Mammary epithelial cell (primary cell): ENCODE measurements at regions of chr7 and their contacts with region 1.

Region 1: DNA sequence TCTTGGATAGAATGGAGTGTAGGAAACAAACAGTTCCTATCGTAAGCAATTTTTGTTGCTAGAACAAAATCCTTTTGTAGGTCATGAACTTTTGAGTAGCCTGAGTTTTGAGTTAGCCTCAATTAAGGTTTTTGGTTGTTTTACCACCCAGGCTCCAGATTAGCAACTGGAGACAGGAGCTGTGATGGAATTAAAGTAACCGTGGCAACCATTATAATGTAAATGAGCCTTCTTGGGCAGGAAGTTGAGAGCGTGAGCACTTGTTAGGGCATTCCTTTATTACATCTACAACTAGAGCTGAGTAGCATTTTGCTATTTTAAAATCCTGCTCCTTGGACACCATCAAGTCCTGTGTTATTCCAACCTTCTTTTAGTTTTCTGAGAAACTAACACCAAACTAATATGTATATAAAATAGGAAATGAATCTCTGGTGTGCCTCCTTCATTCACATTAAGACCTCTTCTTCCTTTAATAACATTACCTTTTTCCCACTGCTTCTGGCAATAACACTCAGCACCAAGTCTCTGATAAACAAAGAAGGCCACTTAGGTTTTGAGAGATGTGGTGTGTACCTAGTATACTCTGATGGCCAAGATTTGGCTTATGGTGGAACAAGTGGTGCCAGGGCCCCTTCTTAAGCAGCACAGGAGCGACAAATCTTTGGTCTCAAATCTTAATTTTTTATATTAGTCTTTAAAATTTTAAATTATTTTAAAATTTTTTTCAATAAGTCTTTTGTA is 34.0 kb downstream of the AHCYL2 start:
- DNase-seq: no peak
- H3K4me3 ChIP-seq: no peak overlapping the region
- H3K27ac ChIP-seq: no peak overlapping the region
- H3K4me1 ChIP-seq: peaks cover 7% of the 10 kb centered on the region
- H3K27me3 ChIP-seq: no peaks in the 10 kb centered on the region
- CTCF ChIP-seq: no peak

Region 2: DNA sequence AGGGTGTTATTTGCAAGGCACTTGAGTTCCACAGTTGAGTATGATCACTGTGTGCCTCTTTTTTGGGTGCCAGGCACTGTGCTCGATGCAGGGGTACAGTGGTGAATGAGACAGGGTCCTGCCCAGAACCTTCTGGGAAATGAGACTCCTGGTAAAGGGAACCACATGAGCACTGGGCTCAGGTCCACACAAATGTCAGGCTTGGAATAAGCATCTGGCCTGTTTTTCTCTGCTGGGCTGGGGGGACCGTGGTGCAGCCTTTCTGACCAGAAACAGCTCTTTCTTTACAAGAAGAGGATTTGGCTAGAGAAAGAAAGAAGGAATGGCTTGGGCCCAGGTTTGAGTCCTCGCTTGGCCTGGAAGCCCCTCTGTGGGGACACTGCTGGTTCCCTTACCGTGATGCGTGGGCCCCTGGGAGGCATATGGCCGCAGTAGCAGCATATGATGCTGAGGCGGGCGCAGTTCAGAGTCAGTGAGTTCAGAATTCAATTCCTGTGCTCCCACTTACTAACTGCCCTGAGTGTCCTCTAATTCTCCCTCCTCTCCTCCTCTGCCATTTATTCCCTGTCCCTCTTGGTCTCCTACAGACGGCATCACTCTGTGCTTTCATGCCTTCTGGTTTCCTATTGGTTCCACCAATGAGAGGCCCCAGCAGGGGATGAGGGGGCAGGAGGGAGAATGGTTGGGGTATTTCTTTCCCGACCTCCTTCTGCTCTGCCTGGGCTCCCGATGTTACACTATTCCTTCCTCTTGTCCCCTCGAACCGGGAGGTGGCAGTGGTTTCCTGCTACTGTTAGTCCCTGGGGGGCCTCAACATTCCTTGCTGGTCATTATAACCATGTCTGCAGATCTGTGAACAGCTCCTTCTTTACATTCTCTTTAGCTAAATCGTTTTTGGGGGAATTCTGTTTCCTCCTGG is 338.7 kb before region 1 on chr7:
- CTCF ChIA-PET with region 1: no interaction called
- dilution Hi-C with region 1: no loop called
- in situ Hi-C with region 1: no loop called
- intact Hi-C with region 1: no loop called
- DNase-seq: no peak
- H3K4me3 ChIP-seq: no peak overlapping the region
- H3K27ac ChIP-seq: no peak overlapping the region
- H3K4me1 ChIP-seq: no peaks in the 10 kb centered on the region
- H3K27me3 ChIP-seq: peaks cover 8% of the 10 kb centered on the region
- CTCF ChIP-seq: no peak

Region 3: DNA sequence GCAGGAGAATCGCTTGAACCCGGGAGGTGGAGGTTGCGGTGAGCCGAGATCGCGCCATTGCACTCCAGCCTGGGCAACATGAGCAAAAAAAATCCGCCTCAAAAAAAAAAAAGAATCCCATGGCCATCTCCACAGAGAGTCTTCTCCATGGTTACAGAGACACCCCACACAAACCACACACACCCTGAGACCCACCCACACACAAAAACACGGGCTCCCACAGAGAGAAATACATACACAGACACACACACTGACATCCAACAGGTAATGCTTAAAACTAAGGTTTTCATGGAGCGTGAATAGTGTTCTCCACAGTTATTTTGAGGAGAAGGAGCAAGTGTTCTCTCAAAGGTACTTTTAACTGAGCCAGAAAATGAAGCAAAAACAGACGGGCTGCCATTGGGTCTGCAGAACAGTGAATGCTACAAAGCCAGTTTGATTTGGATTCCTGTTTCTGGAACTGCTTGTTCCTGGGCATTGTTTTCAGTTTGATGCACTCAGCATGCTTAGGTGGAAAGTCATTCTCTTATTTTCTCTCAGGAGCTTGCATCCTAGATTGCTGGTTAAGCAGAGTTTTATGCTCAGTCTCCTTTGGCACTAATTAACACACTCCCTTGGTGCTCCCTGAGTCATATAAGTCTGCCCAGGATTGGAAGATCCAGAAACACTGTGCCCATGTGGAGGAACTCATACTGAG is 18.6 kb before region 1 on chr7:
- CTCF ChIA-PET with region 1: no interaction called
- dilution Hi-C with region 1: no loop called
- in situ Hi-C with region 1: no loop called
- intact Hi-C with region 1: loop called (anchors 2 kb)
- DNase-seq: peak; percentile 16
- H3K4me3 ChIP-seq: no peak overlapping the region
- H3K27ac ChIP-seq: no peak overlapping the region
- H3K4me1 ChIP-seq: no peaks in the 10 kb centered on the region
- H3K27me3 ChIP-seq: no peaks in the 10 kb centered on the region
- CTCF ChIP-seq: no peak